SK-N-SH (cell line): ENCODE measurements at regions of chr7 and their contacts with region 1.

Region 1: GRCh38 chr7:18352339-18353255 is 143.0 kb upstream of the HDAC9 start:
- DNase-seq: peak; percentile 59
- H3K4me3 ChIP-seq: no peak overlapping the region; a peak in 1 of 4 replicates
- H3K27ac ChIP-seq: peak overlapping the region in 1 of 2 experiments; percentile 39; a peak in 2 of 4 replicates
- H3K4me1 ChIP-seq: peaks cover 8 to 36% of the 10 kb centered on the region in 2 experiments; a peak in 3 of 4 replicates
- H3K27me3 ChIP-seq: no peaks in the 10 kb centered on the region
- CTCF ChIP-seq: peak; percentile 97
- EP300 ChIP-seq: no peak
- RAD21 ChIP-seq: peak; percentile 99

Region 2: DNA sequence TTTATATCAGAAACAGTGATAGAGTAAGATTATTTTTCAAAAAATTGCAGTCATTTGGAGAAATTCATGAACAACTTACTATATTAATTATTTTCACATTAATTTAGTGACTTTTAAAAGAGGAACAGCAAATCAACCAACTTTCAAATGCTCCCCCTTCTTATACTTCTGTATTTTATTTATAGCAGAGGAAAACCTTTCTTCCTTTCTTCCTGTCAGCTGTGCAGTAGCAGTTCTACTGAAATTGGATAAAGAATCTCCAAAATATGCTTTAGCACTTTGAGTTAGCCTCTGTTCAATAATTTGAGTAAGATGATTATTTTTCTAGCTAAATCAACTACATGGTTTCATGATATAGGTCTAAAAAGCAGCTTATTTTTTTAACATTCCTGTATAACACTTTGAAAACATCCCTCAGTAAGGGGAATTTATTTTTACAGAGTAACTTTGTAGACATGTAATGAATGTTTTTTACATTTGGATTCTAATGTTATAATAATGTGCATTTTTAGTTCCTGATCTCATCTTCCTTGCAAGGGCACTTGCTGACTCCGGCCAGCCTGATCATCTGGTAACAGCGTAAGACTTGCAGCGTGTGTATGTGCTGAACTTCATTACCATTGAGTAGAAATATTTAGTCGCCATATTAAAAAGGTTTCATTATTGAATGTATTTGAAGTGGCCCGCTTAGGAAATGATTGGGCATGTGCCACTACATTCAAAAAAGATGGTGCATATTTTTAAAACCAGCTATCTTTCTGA is 15.4 kb before region 1 on chr7:
- CTCF ChIA-PET with region 1: interaction called, 10 read pairs
- POLR2A ChIA-PET with region 1: no interaction called
- DNase-seq: no peak
- H3K4me3 ChIP-seq: no peak overlapping the region
- H3K27ac ChIP-seq: no peak overlapping the region
- H3K4me1 ChIP-seq: no peaks in the 10 kb centered on the region
- H3K27me3 ChIP-seq: no peaks in the 10 kb centered on the region; the same call in 1 of the 2 replicates
- CTCF ChIP-seq: no peak
- EP300 ChIP-seq: no peak
- RAD21 ChIP-seq: no peak

Region 3: DNA sequence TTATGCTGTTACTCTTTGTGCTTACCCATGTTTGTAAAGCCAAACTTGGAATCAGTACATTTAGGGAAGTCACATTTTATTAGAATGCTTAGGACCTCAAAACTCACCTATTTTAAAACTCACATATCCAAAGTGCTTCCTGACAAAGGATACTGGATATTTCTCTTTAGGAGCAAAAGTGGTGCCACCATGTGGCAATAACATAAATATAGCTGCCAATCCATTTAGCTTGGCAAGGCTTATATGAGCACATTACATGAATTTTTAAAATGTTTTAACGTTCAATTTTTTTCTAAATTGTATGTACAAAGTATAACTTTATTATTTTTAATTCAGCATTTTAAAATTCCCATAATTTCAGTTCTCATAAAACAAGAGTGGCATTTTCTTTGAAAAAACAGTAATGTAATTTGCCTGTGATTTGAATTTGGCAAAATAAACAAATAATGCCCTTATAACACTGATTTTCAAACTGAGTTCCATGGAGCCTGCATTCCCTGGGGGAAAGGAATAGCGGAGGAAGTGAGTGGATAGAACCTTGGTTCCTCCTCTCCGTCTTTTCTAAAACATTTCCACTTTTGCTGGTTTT is 218.4 kb after region 1 on chr7:
- CTCF ChIA-PET with region 1: interaction called, 495 read pairs
- POLR2A ChIA-PET with region 1: interaction called, 6 read pairs
- DNase-seq: peak; percentile 65
- H3K4me3 ChIP-seq: no peak overlapping the region
- H3K27ac ChIP-seq: peak overlapping the region in 1 of 2 experiments; percentile 53; a peak in 1 of 4 replicates
- H3K4me1 ChIP-seq: peaks cover 10 to 13% of the 10 kb centered on the region in 2 experiments; a peak in 3 of 4 replicates
- H3K27me3 ChIP-seq: no peaks in the 10 kb centered on the region
- CTCF ChIP-seq: peak; percentile 93
- EP300 ChIP-seq: no peak
- RAD21 ChIP-seq: peak; percentile 95

Region 4: DNA sequence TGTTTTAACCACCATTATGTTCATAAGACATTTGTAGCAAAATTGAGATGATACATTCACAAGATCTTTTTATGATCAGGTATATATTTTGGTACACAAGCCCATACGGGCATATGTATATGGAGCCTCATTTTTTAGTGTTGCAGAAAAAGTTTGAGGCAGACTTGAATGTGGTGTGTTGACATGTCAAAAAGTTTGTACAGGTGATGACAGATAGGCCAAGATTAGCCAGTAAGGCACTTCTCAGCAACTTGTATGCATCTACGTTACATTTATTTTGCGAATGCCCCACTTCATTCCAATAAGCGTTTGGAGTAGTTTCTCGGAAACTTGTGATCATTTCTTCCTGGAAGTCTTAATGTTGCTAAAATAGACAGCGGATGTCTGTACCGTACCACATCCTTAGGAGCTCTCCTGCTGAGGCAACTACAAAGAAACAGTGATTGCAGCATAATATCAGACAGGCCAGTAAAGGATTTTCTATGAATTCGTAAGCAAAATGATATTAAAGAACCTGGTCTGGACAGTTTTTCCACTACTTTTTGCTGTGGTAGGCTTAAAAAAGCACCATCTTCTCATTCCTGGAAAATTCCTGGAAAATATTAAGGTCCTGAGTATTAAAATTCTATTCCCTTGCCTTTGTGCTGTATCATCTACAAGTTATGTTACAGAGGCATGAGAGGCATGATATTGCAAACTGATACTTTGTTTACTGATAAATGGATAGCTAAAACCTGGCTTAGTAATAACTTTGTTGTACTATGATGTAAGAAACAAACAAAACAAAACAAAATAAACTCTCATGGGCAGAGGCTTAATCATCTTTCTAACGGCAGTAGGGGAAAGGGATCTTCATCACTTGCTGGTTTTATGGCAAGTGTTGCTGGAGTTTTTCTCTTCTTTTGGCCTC is 296.5 kb after region 1 on chr7:
- CTCF ChIA-PET with region 1: interaction called, 13 read pairs
- POLR2A ChIA-PET with region 1: no interaction called
- DNase-seq: no peak
- H3K4me3 ChIP-seq: no peak overlapping the region
- H3K27ac ChIP-seq: no peak overlapping the region
- H3K4me1 ChIP-seq: peaks cover 0 to 4% of the 10 kb centered on the region in 2 experiments
- H3K27me3 ChIP-seq: no peaks in the 10 kb centered on the region
- CTCF ChIP-seq: no peak
- EP300 ChIP-seq: no peak
- RAD21 ChIP-seq: no peak

Region 5: DNA sequence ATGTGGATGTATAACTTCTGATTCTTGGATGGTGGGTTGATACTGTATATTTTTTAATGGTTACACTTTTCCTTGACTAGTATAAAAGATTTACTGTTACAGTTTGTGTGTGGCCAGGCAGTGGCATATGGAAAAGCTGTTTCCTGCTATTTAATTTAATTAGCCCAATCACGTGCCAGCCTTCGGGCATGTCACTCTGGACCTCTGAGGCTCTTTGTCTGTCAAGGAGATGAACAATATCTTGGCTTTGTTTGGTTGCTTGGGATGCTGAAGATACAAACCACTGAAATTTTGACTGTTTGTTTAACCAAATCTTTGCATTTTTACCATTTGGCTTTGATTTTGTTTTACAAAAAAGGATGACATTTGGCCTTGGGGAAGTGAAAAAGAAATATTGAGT is 328.0 kb after region 1 on chr7:
- CTCF ChIA-PET with region 1: interaction called, 11 read pairs
- POLR2A ChIA-PET with region 1: no interaction called
- DNase-seq: no peak
- H3K4me3 ChIP-seq: no peak overlapping the region
- H3K27ac ChIP-seq: peak overlapping the region; percentile 10 to 40; a peak in 1 of 4 replicates
- H3K4me1 ChIP-seq: peaks cover 4 to 10% of the 10 kb centered on the region in 2 experiments; a peak in 3 of 4 replicates
- H3K27me3 ChIP-seq: no peaks in the 10 kb centered on the region
- CTCF ChIP-seq: no peak
- EP300 ChIP-seq: peak in 1 of 2 experiments; percentile 25; a peak in 1 of 4 replicates
- RAD21 ChIP-seq: no peak

Region 6: GRCh38 chr7:19665399-19666008 is 1312.9 kb after region 1 on chr7:
- CTCF ChIA-PET with region 1: interaction called, 52 read pairs
- POLR2A ChIA-PET with region 1: no interaction called
- DNase-seq: peak; percentile 39
- H3K4me3 ChIP-seq: no peak overlapping the region
- H3K27ac ChIP-seq: no peak overlapping the region
- H3K4me1 ChIP-seq: peaks cover 0 to 3% of the 10 kb centered on the region in 2 experiments; a peak in 2 of 4 replicates
- H3K27me3 ChIP-seq: no peaks in the 10 kb centered on the region; the same call in 1 of the 2 replicates
- CTCF ChIP-seq: peak; percentile 93
- EP300 ChIP-seq: no peak
- RAD21 ChIP-seq: peak; percentile 82